Right cardiac atrium (tissue), 5 donors: ENCODE measurements at regions of chr7 and their contacts with region 1.

Region 1: DNA sequence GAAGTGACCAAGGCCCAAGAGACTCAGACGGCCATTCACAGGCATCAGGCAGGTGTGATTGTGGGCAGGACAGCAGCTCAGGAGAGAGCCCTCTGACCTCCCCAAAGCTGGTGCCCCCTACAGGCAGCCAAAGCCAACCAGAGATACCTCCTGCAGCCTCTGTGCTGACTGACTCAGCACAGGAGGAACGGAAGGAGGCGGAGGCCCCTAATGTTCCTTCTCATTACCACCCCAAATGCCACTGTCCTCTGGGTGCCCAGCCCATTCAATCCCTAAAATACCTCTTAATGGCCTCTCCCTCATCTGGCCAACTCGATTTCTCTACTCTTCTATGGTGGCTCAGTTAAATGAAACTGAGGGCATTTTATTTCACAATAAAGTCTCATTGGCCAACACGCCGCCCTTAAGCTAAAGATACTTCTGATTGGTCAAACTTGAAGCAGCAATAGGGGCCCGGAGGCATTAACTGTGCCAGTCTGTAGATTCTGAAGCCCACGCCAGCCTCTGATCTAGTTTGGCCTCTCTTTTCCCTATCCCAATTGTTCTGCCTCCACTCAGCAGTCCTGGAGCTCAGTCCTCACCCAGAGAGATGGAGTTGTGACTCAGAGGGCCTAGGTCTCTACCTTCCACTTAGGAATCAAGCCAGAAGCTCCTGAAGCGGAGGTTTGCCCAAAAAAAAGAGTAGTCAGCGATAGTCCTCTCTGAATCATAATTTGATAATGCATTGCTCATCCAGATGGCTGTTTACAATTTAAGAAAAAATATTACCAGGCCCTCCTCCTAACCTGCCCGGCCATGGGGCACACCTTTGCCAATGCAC is 1.2 kb downstream of the CYREN start:
- DNase-seq: peak in 2 of 3 donors; percentile 64 to 69
- ATAC-seq: no peak
- H3K4me3 ChIP-seq: peak overlapping the region; percentile 71
- H3K27ac ChIP-seq: peak overlapping the region; percentile 94
- H3K4me1 ChIP-seq: peaks cover 24% of the 10 kb centered on the region
- H3K27me3 ChIP-seq: no peaks in the 10 kb centered on the region

Region 2: GRCh38 chr7:134920026-134920753 is 249.2 kb before region 1 on chr7:
- intact Hi-C with region 1: no loop called
- DNase-seq: no peak
- ATAC-seq: peak in 1 of 2 donors; percentile 25
- H3K4me3 ChIP-seq: no peak overlapping the region
- H3K27ac ChIP-seq: peak overlapping the region; percentile 78
- H3K4me1 ChIP-seq: peaks cover 6% of the 10 kb centered on the region
- H3K27me3 ChIP-seq: no peaks in the 10 kb centered on the region

Region 3: DNA sequence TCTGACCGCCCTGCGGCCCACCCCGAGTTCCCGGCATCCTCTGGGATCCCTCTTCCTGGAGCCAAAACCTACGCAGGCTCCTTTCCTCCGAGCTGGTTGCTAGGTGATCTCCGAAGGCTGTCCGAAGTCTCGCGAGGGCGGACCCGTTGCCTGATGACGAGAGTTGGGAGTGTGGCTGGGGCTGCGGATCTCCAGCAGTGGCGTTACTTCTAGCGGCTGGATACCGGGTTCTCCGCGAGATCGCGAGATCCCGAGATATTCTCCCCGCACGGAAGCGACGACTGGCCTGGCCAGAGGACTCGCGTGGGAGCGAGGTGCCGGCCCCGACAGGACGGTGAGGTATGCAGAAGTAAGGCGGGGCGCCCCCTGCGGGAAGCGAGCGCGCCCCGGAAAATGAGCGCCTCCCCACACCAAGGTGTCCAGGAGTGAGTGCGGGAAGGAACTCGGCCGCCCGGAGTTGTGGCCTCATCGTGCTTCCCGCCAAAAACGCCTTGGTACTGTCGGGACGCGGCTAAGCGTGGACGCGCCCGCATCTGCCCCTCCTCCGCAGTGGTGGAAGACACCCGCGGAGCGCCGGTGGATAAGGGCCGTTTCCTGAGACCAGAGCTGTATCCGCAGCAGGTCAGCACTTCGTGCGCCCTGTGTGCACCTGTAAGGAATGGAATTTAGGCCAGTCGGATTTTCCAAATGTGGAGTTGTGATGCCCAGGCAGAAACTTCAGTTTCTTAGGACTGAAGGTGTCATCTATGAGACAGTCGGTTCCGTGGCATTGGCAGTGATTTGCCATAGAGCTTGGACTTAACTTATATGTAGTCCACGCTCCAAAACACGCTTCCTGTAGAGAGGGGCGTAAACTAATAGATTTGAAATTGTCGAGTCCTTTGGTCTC is 182.7 kb before region 1 on chr7 and contains the start of gene AGBL3:
- intact Hi-C with region 1: loop called in 3 of 4 experiments (anchors 5 to 10 kb)
- DNase-seq: peak; percentile 98 to 99 (median 98)
- ATAC-seq: peak; percentile 99
- H3K4me3 ChIP-seq: peak within 1 kb of the TSS; percentile 79
- H3K27ac ChIP-seq: peak within 1 kb of the TSS; percentile 93
- H3K4me1 ChIP-seq: no peaks in the 10 kb centered on the region
- H3K27me3 ChIP-seq: no peaks in the 10 kb centered on the region
- total RNA-seq, gene AGBL3: 1.2 to 3.4 (median 1.8) TPM

Region 4: DNA sequence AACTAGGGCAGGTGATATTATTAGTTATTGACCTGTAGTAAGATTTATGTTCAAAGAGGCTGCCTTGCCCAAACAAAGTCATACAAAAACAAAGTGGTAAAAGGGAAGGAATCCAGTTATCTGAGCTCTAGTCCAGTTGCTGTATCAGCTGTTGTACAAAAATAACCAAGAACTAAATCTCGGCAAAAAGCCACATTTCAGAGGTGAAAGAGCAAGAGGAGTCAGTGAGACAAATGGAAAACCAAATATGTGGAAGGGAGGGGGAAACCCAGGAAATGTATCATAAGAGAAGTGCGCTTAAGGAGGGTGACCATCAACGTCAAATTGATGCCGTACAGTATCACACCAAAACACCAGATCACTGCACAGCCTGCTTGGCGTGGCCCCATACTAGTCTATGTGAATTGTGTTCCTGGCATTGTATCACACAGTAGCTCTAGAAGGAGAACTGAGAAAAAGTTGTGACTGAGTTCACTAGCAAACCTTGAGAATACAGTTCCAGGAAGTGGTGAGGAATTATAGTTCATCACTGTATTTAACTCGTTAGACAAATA is 176.6 kb before region 1 on chr7:
- intact Hi-C with region 1: loop called in 3 of 4 experiments (anchors 5 to 10 kb)
- DNase-seq: peak in 2 of 3 donors; percentile 51 to 54
- ATAC-seq: peak; percentile 68 to 93
- H3K4me3 ChIP-seq: no peak overlapping the region
- H3K27ac ChIP-seq: no peak overlapping the region
- H3K4me1 ChIP-seq: no peaks in the 10 kb centered on the region
- H3K27me3 ChIP-seq: no peaks in the 10 kb centered on the region

Region 5: DNA sequence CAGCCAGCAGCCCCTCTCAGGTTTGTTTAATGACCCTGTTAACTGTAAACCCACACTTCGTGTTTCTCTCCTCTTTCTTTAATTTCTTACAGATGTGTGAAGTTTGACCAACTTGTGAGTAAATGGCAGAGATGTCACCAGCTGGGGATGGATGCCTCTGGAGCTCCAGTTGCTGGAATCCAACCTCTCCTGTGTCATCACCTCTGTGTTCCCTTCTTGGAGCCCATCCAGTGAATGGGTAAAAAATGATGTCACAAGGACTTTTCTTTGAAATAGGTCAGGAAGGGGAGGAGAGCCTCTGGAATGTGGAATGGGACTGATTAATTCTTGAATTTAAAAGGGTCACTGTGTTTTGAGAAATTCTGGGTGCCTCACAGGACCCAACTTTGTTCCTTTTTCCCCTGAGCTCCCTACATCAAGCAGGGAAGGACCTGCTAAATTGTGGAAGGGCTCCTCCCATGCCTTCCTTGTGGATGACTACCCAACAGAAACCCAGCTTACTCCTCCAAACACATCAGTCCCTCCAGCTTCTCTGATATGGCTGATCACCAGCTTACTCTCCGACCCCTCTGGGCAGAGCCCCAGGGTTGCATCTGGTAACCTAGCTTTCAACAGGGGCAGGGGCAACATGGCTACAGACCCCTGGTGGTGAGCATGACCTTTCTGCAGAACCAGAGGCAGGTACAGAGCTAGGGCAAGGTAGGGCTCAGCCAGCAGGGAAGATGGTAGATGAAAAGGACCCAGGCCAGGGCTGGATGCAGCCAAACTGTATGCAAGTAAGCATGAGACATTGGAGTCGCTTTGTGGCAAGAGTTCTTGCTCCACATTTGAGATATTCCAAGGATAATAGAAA is 131.8 kb after region 1 on chr7:
- intact Hi-C with region 1: no loop called
- DNase-seq: no peak
- ATAC-seq: no peak
- H3K4me3 ChIP-seq: no peak overlapping the region
- H3K27ac ChIP-seq: no peak overlapping the region
- H3K4me1 ChIP-seq: no peaks in the 10 kb centered on the region
- H3K27me3 ChIP-seq: no peaks in the 10 kb centered on the region

Region 6: DNA sequence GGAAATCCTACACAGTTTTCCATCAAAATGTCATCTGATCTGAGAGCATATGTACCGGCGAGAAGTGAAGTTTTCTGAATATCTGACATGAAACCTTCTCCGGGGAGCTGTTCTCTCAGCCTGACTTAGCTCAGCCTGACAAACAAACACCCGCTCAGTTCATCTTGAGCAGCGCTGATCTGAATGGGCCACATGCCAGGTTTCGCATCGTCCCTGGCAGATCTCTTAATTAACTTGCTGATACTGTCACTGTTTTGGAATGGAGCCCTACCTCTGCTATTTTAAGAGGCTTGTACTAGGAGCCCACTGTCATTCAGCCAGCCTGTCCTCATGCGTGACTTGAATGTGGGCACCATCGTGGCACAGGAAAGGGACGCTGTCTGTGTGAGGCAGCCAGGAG is 173.5 kb after region 1 on chr7:
- intact Hi-C with region 1: no loop called
- DNase-seq: peak; percentile 68 to 88 (median 86)
- ATAC-seq: peak; percentile 82 to 84
- H3K4me3 ChIP-seq: no peak overlapping the region
- H3K27ac ChIP-seq: no peak overlapping the region
- H3K4me1 ChIP-seq: peaks cover 2% of the 10 kb centered on the region
- H3K27me3 ChIP-seq: no peaks in the 10 kb centered on the region

Region 7: GRCh38 chr7:135509903-135510602 is 340.7 kb after region 1 on chr7 and contains the start of gene CNOT4:
- intact Hi-C with region 1: no loop called
- DNase-seq: peak; percentile 97 to 99 (median 98)
- ATAC-seq: peak; percentile 99
- H3K4me3 ChIP-seq: peak within 1 kb of the TSS; percentile 98
- H3K27ac ChIP-seq: peak within 1 kb of the TSS; percentile 98
- H3K4me1 ChIP-seq: peaks cover 2% of the 10 kb centered on the region
- H3K27me3 ChIP-seq: no peaks in the 10 kb centered on the region
- total RNA-seq, gene CNOT4: 25.3 to 33.1 (median 29.3) TPM